WTC11 (cell line): ENCODE measurements at regions of chr9 and their contacts with region 1.

Region 1: DNA sequence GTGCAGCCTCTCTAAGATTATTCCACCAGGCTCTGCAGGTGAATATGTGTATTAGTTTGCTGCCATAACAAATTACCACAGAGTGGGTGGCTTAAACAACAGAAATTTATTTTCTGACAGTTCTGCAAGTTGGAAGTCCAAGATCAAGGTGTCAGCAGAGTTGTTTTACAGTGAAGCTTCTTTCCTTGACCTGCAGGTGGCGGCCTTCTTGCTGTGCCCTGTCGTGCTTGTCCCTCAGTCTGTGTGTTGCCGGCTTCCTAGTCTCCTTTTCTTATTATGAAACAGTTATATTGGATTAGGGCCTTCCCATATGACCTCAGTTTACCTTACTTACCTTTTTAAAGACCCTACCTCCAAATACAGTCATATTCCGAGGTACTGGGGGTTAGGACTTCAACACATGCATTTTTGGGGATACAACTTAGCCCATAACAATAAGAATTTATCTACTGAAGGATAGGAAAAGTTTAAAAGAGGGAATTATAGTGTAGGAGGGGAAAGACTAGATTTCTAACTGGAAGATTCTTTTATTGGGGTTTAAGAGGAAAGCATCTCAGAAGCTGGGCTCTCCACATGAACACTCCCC is 97.4 kb downstream of the OSTF1 start:
- DNase-seq: peak; percentile 67
- ATAC-seq: peak; percentile 91
- H3K4me3 Mint-ChIP-seq: no peak overlapping the region
- H3K27ac Mint-ChIP-seq: no peak overlapping the region
- H3K4me1 Mint-ChIP-seq: no peaks in the 10 kb centered on the region
- H3K27me3 Mint-ChIP-seq: no peaks in the 10 kb centered on the region
- CTCF ChIP-seq: peak; percentile 54

Region 2: GRCh38 chr9:75142202-75142601 is 43.5 kb before region 1 on chr9:
- CTCF ChIA-PET with region 1: no interaction called
- POLR2A ChIA-PET with region 1: no interaction called
- DNase-seq: no peak
- ATAC-seq: no peak
- H3K4me3 Mint-ChIP-seq: no peak overlapping the region
- H3K27ac Mint-ChIP-seq: no peak overlapping the region
- H3K4me1 Mint-ChIP-seq: no peaks in the 10 kb centered on the region
- H3K27me3 Mint-ChIP-seq: no peaks in the 10 kb centered on the region
- CTCF ChIP-seq: no peak

Region 3: GRCh38 chr9:75170898-75171360 is 14.7 kb before region 1 on chr9:
- CTCF ChIA-PET with region 1: interaction called, 22 read pairs
- POLR2A ChIA-PET with region 1: no interaction called
- DNase-seq: no peak
- ATAC-seq: no peak
- H3K4me3 Mint-ChIP-seq: no peak overlapping the region
- H3K27ac Mint-ChIP-seq: no peak overlapping the region
- H3K4me1 Mint-ChIP-seq: peaks cover 19% of the 10 kb centered on the region
- H3K27me3 Mint-ChIP-seq: no peaks in the 10 kb centered on the region
- CTCF ChIP-seq: no peak

Region 4: GRCh38 chr9:75200892-75201470 is 15.3 kb after region 1 on chr9:
- CTCF ChIA-PET with region 1: interaction called, 12 read pairs
- POLR2A ChIA-PET with region 1: no interaction called
- DNase-seq: no peak
- ATAC-seq: no peak
- H3K4me3 Mint-ChIP-seq: no peak overlapping the region
- H3K27ac Mint-ChIP-seq: no peak overlapping the region
- H3K4me1 Mint-ChIP-seq: peaks cover 23% of the 10 kb centered on the region
- H3K27me3 Mint-ChIP-seq: no peaks in the 10 kb centered on the region
- CTCF ChIP-seq: peak; percentile 55

Region 5: GRCh38 chr9:75238311-75238978 is 52.8 kb after region 1 on chr9:
- CTCF ChIA-PET with region 1: interaction called, 10 read pairs
- POLR2A ChIA-PET with region 1: no interaction called
- DNase-seq: peak; percentile 49
- ATAC-seq: peak; percentile 99
- H3K4me3 Mint-ChIP-seq: no peak overlapping the region
- H3K27ac Mint-ChIP-seq: no peak overlapping the region
- H3K4me1 Mint-ChIP-seq: no peaks in the 10 kb centered on the region
- H3K27me3 Mint-ChIP-seq: no peaks in the 10 kb centered on the region
- CTCF ChIP-seq: peak; percentile 60